CD4-positive, alpha-beta T cell (primary cell): ENCODE measurements at regions of chr13 and their contacts with region 1.

Region 1: DNA sequence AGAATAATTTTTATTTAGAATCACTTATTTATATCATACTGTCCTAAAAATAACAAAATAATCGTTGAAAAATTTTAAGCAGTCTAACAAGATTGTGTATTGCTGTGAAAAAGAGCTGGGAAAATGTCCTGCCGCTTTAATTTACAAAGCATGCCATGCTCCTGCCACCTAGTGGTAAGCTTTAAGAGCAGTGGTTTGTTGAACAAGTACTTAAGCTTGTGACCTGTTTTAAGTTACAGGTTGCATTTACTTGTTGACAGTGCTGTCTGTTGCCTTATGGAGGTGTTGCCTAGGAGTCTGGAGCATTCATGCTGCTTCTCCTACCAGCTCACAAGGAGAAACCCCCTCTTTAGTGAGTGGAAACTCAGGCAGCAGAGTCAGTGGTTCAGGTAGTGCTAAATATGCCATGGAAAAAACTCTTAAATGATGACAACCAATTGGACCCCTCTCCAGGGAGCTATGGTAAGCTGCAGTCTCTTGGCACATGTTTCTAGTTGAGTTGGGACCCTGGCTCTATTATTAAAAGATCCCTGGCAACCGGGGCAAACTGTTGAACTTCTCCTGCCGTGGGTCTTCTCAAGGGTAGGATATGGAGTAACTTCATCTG is 68.4 kb downstream of the SPATA13 start:
- DNase-seq: peak in 7 of 14 experiments; percentile 8 to 79 (median 54)
- ATAC-seq: peak; percentile 77
- H3K4me3 ChIP-seq: no peak overlapping the region
- H3K4me3 Mint-ChIP-seq: no peak overlapping the region
- H3K27ac ChIP-seq: no peak overlapping the region
- H3K27ac Mint-ChIP-seq: no peak overlapping the region
- H3K4me1 ChIP-seq: peaks cover 18% of the 10 kb centered on the region
- H3K4me1 Mint-ChIP-seq: peaks cover 27% of the 10 kb centered on the region
- H3K27me3 ChIP-seq: no peaks in the 10 kb centered on the region
- H3K27me3 Mint-ChIP-seq: no peaks in the 10 kb centered on the region
- CTCF ChIP-seq: peak; percentile 93

Region 2: GRCh38 chr13:23842406-23842805 is 386.5 kb before region 1 on chr13:
- CTCF ChIA-PET with region 1: no interaction called
- POLR2A ChIA-PET with region 1: no interaction called
- intact Hi-C with region 1: no loop called
- DNase-seq: no peak
- ATAC-seq: no peak
- H3K4me3 ChIP-seq: no peak overlapping the region
- H3K4me3 Mint-ChIP-seq: no peak overlapping the region
- H3K27ac ChIP-seq: no peak overlapping the region
- H3K27ac Mint-ChIP-seq: no peak overlapping the region
- H3K4me1 ChIP-seq: peaks cover 3% of the 10 kb centered on the region
- H3K4me1 Mint-ChIP-seq: peaks cover 11% of the 10 kb centered on the region
- H3K27me3 ChIP-seq: no peaks in the 10 kb centered on the region
- H3K27me3 Mint-ChIP-seq: no peaks in the 10 kb centered on the region
- CTCF ChIP-seq: no peak

Region 3: GRCh38 chr13:24022568-24022967 is 206.4 kb before region 1 on chr13:
- CTCF ChIA-PET with region 1: no interaction called
- POLR2A ChIA-PET with region 1: no interaction called
- intact Hi-C with region 1: no loop called
- DNase-seq: no peak
- ATAC-seq: no peak
- H3K4me3 ChIP-seq: no peak overlapping the region
- H3K4me3 Mint-ChIP-seq: no peak overlapping the region
- H3K27ac ChIP-seq: no peak overlapping the region
- H3K27ac Mint-ChIP-seq: no peak overlapping the region
- H3K4me1 ChIP-seq: no peaks in the 10 kb centered on the region
- H3K4me1 Mint-ChIP-seq: no peaks in the 10 kb centered on the region
- H3K27me3 ChIP-seq: no peaks in the 10 kb centered on the region
- H3K27me3 Mint-ChIP-seq: no peaks in the 10 kb centered on the region
- CTCF ChIP-seq: no peak

Region 4: DNA sequence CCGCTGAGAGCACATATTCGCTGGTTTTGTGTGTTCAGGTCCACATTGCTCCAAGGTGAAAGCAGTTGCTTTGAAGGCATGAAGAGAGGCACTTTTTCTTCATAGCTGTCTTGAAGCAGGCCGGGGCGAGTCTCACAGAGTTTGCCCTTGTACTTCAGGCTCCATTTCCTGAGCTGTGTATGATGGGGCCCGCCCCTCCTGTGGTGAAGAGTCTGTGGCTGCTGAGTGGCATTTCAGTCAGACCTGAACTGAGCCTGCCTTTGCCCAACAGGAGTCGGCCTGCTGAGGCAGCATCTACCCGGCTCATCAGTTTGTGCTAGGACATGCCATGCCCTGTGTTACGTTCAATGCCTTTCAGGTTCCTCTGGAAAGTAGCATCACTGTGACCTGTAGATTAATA is 36.0 kb after region 1 on chr13:
- CTCF ChIA-PET with region 1: interaction called, 11 read pairs
- POLR2A ChIA-PET with region 1: interaction called, 13 read pairs
- intact Hi-C with region 1: no loop called
- DNase-seq: peak; percentile 65 to 92 (median 82)
- ATAC-seq: peak; percentile 87
- H3K4me3 ChIP-seq: peak overlapping the region; percentile 26
- H3K4me3 Mint-ChIP-seq: peak overlapping the region; percentile 86
- H3K27ac ChIP-seq: peak overlapping the region; percentile 81 to 82
- H3K27ac Mint-ChIP-seq: peak overlapping the region; percentile 97
- H3K4me1 ChIP-seq: peaks cover 81% of the 10 kb centered on the region
- H3K4me1 Mint-ChIP-seq: peaks cover 95% of the 10 kb centered on the region
- H3K27me3 ChIP-seq: no peaks in the 10 kb centered on the region
- H3K27me3 Mint-ChIP-seq: no peaks in the 10 kb centered on the region
- CTCF ChIP-seq: no peak

Region 5: GRCh38 chr13:24280720-24281119 is 51.8 kb after region 1 on chr13:
- CTCF ChIA-PET with region 1: interaction called, 11 read pairs
- POLR2A ChIA-PET with region 1: interaction called, 3 read pairs
- intact Hi-C with region 1: loop called in 1 of 2 experiments (anchors 10 kb)
- DNase-seq: peak in 2 of 14 experiments; percentile 31 to 58
- ATAC-seq: no peak
- H3K4me3 ChIP-seq: no peak overlapping the region
- H3K4me3 Mint-ChIP-seq: no peak overlapping the region
- H3K27ac ChIP-seq: no peak overlapping the region
- H3K27ac Mint-ChIP-seq: peak overlapping the region; percentile 97
- H3K4me1 ChIP-seq: peaks cover 67% of the 10 kb centered on the region
- H3K4me1 Mint-ChIP-seq: peaks cover 81% of the 10 kb centered on the region
- H3K27me3 ChIP-seq: no peaks in the 10 kb centered on the region
- H3K27me3 Mint-ChIP-seq: no peaks in the 10 kb centered on the region
- CTCF ChIP-seq: no peak